ENCODE measurements at regions of chr7 and their contacts with region 1.

Region 1: GRCh38 chr7:146084086-146084485 is 32.5 kb upstream of the CNTNAP2 start:
- DNase-seq: no peak
- ATAC-seq: no peak
- H3K4me3 ChIP-seq: no peak overlapping the region
- H3K27ac ChIP-seq: no peak overlapping the region
- H3K4me1 ChIP-seq: no peaks in the 10 kb centered on the region
- H3K27me3 ChIP-seq: no peaks in the 10 kb centered on the region
- CTCF ChIP-seq: no peak

Region 2: DNA sequence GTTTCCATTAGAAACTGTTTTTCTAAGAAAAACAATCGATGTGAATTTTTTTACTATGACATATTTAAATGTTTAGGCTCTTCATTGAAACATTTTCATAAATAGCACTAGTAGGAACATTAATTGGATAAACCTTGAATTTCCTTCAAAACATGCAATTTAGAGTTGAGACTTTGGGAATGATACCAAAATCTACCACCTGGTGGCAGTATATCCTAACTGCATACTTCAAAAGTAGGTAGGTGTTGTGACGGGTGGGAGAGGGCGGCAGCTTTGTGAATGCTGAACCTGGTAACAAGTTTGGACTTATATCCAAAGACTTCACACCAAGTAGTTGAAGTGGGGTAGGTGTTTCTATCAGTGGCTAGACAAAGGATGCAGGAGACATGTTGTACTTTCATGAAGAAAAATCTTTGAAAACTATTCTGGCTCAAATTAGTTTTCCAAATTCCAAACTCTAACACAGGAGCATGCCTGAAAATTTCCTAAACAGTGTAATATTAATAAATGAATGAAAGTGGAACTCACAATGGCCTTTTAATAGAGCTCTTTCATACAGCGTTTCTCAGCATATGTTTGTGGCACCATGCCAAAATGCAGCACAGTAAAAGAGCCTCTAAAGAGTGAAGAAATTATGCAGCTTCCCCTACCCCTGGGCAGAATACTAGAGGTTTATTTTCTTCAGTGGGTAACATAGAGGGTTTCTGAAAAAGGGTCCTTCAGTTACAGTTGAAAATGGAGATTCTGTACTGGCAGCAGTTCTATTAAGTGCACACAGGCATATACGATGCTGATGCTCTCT is 1047.3 kb before region 1 on chr7:
- intact Hi-C with region 1: loop called (anchors 10 kb)
- DNase-seq: no peak
- ATAC-seq: peak; percentile 57 to 69
- H3K4me3 ChIP-seq: no peak overlapping the region
- H3K27ac ChIP-seq: no peak overlapping the region
- H3K4me1 ChIP-seq: no peaks in the 10 kb centered on the region
- H3K27me3 ChIP-seq: no peaks in the 10 kb centered on the region
- CTCF ChIP-seq: peak; percentile 78

Region 3: GRCh38 chr7:145831616-145832206 is 252.4 kb before region 1 on chr7:
- intact Hi-C with region 1: no loop called
- DNase-seq: no peak
- ATAC-seq: no peak
- H3K4me3 ChIP-seq: no peak overlapping the region
- H3K27ac ChIP-seq: no peak overlapping the region
- H3K4me1 ChIP-seq: no peaks in the 10 kb centered on the region
- H3K27me3 ChIP-seq: no peaks in the 10 kb centered on the region
- CTCF ChIP-seq: no peak

Region 4: DNA sequence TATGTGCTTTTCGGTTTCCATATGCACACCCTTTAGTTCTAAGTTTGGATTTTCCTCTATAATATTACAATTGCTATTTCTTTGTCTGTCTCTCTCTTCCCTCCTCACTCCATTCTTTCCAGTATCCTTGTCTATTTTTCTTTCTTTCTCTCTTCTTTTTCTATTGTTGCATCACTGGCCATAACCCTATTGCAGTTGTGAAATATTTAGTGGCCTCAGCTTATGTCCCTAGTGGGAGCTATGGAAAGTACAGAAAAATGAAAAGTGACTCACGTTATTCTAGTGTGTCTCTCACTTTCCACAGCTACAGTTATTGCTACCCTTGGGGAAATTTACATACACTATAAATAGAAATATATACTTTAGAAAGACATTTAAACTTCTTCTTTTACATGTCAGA is 91.6 kb after region 1 on chr7:
- intact Hi-C with region 1: no loop called
- DNase-seq: no peak
- ATAC-seq: no peak
- H3K4me3 ChIP-seq: no peak overlapping the region
- H3K27ac ChIP-seq: no peak overlapping the region
- H3K4me1 ChIP-seq: no peaks in the 10 kb centered on the region
- H3K27me3 ChIP-seq: no peaks in the 10 kb centered on the region
- CTCF ChIP-seq: no peak

Measured in lower lobe of right lung (tissue), 2 donors.